Psoas muscle (tissue), 8 donors: ENCODE measurements at regions of chr2 and their contacts with region 1.

Region 1: GRCh38 chr2:156332534-156333273 is at the start of gene NR4A2:
- DNase-seq: peak; percentile 85 to 91
- ATAC-seq: peak; percentile 76 to 78 (median 76)
- H3K4me3 ChIP-seq: peak within 1 kb of the TSS; percentile 78
- H3K27ac ChIP-seq: peak within 1 kb of the TSS; percentile 93
- H3K4me1 ChIP-seq: peaks cover 15% of the 10 kb centered on the region
- H3K27me3 ChIP-seq: no peaks in the 10 kb centered on the region
- CTCF ChIP-seq: no peak
- total RNA-seq, gene NR4A2: 0.86 to 2.3 (median 1.3) TPM

Region 2: DNA sequence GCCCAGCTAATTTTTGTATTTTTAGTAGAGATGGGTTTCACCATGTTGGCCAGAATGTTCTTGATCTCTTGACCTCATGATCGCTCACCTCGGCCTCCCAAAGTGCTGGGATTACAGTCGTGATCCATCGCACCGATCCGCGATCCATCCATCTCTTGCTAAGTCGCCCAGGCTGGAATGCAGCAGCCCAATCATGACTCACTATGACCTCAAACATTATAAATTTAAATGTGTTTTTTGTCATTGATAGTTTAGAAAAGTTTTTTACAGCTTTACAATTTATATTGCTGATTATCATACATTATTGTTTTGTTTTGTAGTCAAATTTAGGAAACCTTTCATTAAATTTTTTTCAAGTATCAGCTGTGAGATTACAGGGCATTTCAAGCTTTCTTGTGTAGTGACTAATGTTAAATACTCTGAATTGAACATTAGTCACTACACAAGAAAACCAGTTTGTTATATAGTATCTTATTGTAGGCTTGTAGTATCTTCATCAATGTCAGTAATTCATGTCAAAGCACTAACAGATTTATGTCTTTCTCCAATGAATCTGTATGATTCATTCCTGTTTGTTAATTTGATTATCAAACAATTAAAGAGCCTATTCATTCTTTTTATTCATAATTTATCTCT is 37.6 kb before region 1 on chr2:
- intact Hi-C with region 1: no loop called
- DNase-seq: no peak
- ATAC-seq: no peak
- H3K4me3 ChIP-seq: no peak overlapping the region
- H3K27ac ChIP-seq: no peak overlapping the region
- H3K4me1 ChIP-seq: no peaks in the 10 kb centered on the region
- H3K27me3 ChIP-seq: peaks cover 0 to 3% (median 0%) of the 10 kb centered on the region in 3 donors
- CTCF ChIP-seq: no peak

Region 3: DNA sequence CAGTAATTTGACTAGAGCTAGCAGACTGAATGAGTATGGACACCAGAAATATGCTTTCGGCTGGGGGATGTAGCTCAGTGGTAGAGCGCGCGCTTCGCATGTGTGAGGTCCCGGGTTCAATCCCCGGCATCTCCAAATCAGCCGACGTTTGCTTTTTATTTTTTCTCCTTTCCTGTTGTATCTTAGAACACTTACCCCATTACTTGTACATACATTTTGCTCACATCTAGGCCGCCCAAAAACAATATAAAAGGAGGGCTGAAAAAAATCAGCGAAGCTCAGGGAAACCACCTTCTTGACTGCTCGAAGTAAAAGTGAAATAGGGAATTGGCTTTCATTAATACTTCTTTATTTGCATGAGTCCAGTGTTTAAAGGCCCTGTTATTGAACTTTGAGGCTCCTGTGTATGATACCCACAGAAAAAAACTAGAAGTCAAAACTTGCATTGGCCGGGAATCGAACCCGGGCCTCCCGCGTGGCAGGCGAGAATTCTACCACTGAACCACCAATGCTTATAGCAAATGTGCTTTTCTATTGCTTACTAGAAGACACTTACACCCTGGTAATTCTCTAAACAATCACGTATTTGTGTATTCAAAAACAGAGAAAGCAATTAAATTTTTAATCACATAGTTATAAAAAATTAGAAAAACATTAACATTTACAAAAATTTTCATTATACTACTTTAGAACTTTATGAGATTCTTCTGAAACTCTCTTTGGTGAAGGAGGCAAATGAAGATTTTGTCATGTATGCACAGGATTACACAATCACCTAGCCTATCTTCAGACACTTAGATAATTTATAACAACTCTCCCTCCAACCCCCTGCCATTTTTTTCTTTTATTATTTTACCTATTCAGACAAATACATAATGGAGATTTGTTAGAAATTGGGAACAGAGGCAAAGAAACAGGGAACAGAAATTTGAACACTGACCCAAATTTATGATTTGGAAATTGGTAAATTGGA is 68.3 kb after region 1 on chr2:
- intact Hi-C with region 1: loop called (anchors 2 kb)
- DNase-seq: peak; percentile 63 to 78
- ATAC-seq: peak; percentile 84 to 91 (median 87)
- H3K4me3 ChIP-seq: peak overlapping the region; percentile 85
- H3K27ac ChIP-seq: peak overlapping the region; percentile 95
- H3K4me1 ChIP-seq: peaks cover 26% of the 10 kb centered on the region
- H3K27me3 ChIP-seq: no peaks in the 10 kb centered on the region
- CTCF ChIP-seq: no peak

Region 4: GRCh38 chr2:156589381-156590079 is 256.8 kb after region 1 on chr2:
- intact Hi-C with region 1: loop called in 1 of 2 experiments (anchors 10 kb)
- DNase-seq: no peak
- ATAC-seq: peak in 2 of 4 donors; percentile 67 to 72
- H3K4me3 ChIP-seq: no peak overlapping the region
- H3K27ac ChIP-seq: no peak overlapping the region
- H3K4me1 ChIP-seq: no peaks in the 10 kb centered on the region
- H3K27me3 ChIP-seq: no peaks in the 10 kb centered on the region
- CTCF ChIP-seq: peak; percentile 41